Mammary epithelial cell (primary cell): ENCODE measurements at regions of chr18 and their contacts with region 1.

Region 1: GRCh38 chr18:45863469-45863868 is 38.0 kb downstream of the SIGLEC15 start:
- DNase-seq: no peak
- H3K4me3 ChIP-seq: no peak overlapping the region
- H3K27ac ChIP-seq: no peak overlapping the region
- H3K4me1 ChIP-seq: no peaks in the 10 kb centered on the region
- H3K27me3 ChIP-seq: no peaks in the 10 kb centered on the region
- CTCF ChIP-seq: no peak

Region 2: DNA sequence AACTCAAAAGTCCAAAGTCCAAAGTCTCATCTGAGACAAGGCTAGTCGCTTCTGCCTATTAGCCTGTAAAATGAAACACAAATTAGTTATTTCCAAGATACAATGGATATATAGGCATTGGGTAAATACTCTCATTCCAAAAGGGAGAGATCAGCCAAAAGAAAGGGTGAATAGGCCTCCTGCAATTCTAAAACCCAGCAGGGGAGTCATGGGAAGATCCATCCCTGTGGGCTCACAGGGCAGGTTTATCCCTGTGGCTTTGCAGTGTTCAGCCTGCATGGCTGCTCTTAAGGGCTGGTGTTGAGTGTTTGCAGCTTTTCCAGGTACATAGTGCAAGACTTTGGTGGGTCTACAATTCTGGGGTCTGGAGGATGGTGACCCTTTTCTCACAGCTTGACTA is 160.6 kb before region 1 on chr18:
- CTCF ChIA-PET with region 1: no interaction called
- dilution Hi-C with region 1: no loop called
- in situ Hi-C with region 1: loop called in 1 of 2 experiments (anchors 10 kb)
- intact Hi-C with region 1: no loop called
- DNase-seq: no peak
- H3K4me3 ChIP-seq: no peak overlapping the region
- H3K27ac ChIP-seq: no peak overlapping the region
- H3K4me1 ChIP-seq: no peaks in the 10 kb centered on the region
- H3K27me3 ChIP-seq: no peaks in the 10 kb centered on the region
- CTCF ChIP-seq: no peak

Region 3: GRCh38 chr18:45900623-45901022 is 37.2 kb after region 1 on chr18:
- CTCF ChIA-PET with region 1: no interaction called
- dilution Hi-C with region 1: loop called (anchors 5 kb)
- in situ Hi-C with region 1: no loop called
- intact Hi-C with region 1: loop called (anchors 5 kb)
- DNase-seq: no peak
- H3K4me3 ChIP-seq: no peak overlapping the region
- H3K27ac ChIP-seq: no peak overlapping the region
- H3K4me1 ChIP-seq: no peaks in the 10 kb centered on the region
- H3K27me3 ChIP-seq: no peaks in the 10 kb centered on the region
- CTCF ChIP-seq: no peak

Region 4: DNA sequence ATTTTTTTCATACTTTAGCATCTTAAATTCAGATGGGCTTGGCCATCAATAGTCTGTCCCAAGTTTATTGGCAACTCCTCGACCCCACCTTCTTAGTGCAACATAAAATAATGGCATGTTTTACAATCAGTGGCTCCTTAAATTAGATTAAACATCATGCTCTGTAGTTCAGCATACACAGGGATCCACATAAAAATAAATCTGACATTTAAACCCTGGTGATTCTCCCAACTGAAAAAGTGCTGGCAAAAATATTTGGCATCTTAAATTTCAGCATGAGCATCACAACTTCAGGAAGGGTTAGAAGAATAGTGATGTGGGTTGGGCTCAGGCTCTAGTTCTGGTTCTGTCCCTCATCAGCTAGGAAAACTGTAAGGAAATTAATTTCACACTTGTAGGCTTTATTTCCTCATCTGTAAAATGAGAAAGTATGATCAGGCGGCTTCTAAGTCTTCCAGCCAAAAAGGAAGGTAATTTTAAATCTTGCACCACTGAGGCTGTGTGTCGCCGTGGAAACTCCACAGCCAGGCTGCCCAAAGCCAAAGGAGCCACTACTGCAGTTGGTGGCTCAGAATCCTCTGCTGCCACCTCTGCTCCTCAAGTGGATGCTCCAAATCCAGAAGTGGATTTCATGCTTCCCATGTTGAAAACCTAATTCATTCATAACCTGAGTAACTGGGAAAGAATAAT is 121.2 kb after region 1 on chr18:
- CTCF ChIA-PET with region 1: no interaction called
- dilution Hi-C with region 1: no loop called
- in situ Hi-C with region 1: no loop called
- intact Hi-C with region 1: no loop called
- DNase-seq: no peak
- H3K4me3 ChIP-seq: no peak overlapping the region
- H3K27ac ChIP-seq: no peak overlapping the region
- H3K4me1 ChIP-seq: no peaks in the 10 kb centered on the region
- H3K27me3 ChIP-seq: no peaks in the 10 kb centered on the region
- CTCF ChIP-seq: no peak